ENCODE measurements at regions of chr3 and their contacts with region 1.

Region 1: GRCh38 chr3:128794770-128795649 is 69.0 kb downstream of the RAB7A start:
- DNase-seq: peak; percentile 81
- ATAC-seq: peak; percentile 91
- H3K4me3 Mint-ChIP-seq: no peak overlapping the region
- H3K27ac Mint-ChIP-seq: peak overlapping the region; percentile 78
- H3K4me1 Mint-ChIP-seq: peaks cover 76% of the 10 kb centered on the region
- H3K27me3 Mint-ChIP-seq: no peaks in the 10 kb centered on the region

Region 2: GRCh38 chr3:128650096-128651050 is 144.6 kb before region 1 on chr3 and contains the start of gene RPN1:
- CTCF ChIA-PET with region 1: interaction called, 10 read pairs
- POLR2A ChIA-PET with region 1: interaction called, 3 read pairs
- DNase-seq: peak; percentile 96
- ATAC-seq: peak; percentile 98
- H3K4me3 Mint-ChIP-seq: peak within 1 kb of the TSS; percentile 88
- H3K27ac Mint-ChIP-seq: peak within 1 kb of the TSS; percentile 89
- H3K4me1 Mint-ChIP-seq: peaks cover 40% of the 10 kb centered on the region
- H3K27me3 Mint-ChIP-seq: no peaks in the 10 kb centered on the region
- total RNA-seq, gene RPN1: 157 to 162 TPM

Region 3: DNA sequence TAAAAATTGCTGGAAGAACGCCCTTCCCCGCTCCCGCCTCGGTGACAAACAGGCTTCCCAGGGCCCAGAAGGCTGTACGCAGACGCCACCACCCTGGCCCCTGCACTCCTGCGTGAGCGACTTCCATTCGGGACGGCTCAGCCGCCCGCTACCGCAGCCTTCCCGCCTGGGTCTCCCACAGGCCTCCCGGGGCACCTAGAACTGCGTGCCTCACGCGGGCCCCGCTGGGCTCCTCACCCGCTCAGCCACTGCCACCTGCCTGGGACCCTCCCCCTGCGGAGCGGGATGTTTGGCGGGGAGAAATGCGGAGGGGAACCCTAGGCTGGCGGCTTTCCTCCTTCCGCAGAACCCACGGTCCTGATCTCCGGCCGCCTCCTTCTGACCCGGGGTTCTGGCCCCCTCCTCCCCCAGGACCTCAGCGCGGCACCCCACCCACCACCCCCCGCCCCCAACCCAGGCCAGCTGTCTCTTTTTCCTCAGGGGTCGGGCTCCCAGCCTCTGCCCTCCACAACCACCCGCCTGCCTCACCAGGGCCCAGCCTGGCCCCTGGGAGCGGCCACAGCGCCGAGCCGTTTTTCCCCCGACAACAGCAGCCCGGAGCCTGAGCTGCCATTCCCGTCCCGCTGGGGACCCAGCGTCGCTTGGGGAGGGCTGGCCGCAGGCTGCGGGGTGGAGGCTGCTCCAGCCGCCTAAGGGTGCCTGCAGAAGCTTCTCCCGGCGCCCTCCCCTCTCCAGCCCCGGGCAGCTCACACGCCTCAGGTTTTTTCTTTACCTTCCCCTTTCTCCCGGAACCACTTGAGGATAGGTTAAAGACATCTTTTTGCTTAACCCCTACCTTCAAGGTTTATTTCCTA is 96.6 kb before region 1 on chr3:
- CTCF ChIA-PET with region 1: interaction called, 12 read pairs
- POLR2A ChIA-PET with region 1: no interaction called
- DNase-seq: no peak
- ATAC-seq: peak; percentile 78
- H3K4me3 Mint-ChIP-seq: peak overlapping the region; percentile 42
- H3K27ac Mint-ChIP-seq: no peak overlapping the region
- H3K4me1 Mint-ChIP-seq: peaks cover 8% of the 10 kb centered on the region
- H3K27me3 Mint-ChIP-seq: peaks cover 7% of the 10 kb centered on the region

Region 4: DNA sequence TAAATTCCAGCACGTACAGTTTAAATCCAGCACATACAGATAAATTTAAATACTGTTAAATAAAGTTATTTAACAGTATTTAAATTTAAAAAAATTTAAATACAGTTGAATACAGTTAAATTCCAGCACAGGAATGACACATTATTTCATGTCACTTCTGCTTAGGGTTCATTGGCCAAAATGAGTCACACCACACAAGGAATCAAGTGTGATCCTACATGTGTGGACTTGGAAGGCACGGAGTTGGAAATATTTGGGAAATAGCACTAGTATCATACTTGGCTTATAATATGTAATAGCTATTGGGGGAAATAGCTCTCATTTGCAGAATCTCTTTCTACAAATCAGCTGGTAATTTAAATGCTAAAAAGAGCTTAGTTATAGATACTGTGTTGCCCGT is 58.4 kb before region 1 on chr3:
- CTCF ChIA-PET with region 1: interaction called, 10 read pairs
- POLR2A ChIA-PET with region 1: no interaction called
- DNase-seq: no peak
- ATAC-seq: no peak
- H3K4me3 Mint-ChIP-seq: no peak overlapping the region
- H3K27ac Mint-ChIP-seq: no peak overlapping the region
- H3K4me1 Mint-ChIP-seq: peaks cover 54% of the 10 kb centered on the region
- H3K27me3 Mint-ChIP-seq: no peaks in the 10 kb centered on the region

Region 5: GRCh38 chr3:128780101-128780837 is 14.7 kb before region 1 on chr3:
- CTCF ChIA-PET with region 1: interaction called, 68 read pairs
- POLR2A ChIA-PET with region 1: no interaction called
- DNase-seq: no peak
- ATAC-seq: no peak
- H3K4me3 Mint-ChIP-seq: no peak overlapping the region
- H3K27ac Mint-ChIP-seq: no peak overlapping the region
- H3K4me1 Mint-ChIP-seq: peaks cover 62% of the 10 kb centered on the region
- H3K27me3 Mint-ChIP-seq: no peaks in the 10 kb centered on the region